Activated CD4-positive, alpha-beta memory T cell treated with anti-CD3 and anti-CD28 coated beads, Interleukin-2, amount 10 ng/mL, durations not matched to agents 7 days and 5 days (primary cell): ENCODE measurements at regions of chr17 and their contacts with region 1.

Region 1: GRCh38 chr17:29180034-29180787 is at the start of gene MYO18A:
- DNase-seq: peak; percentile 84
- H3K4me3 Mint-ChIP-seq: peak within 1 kb of the TSS; percentile 54
- H3K27ac Mint-ChIP-seq: no peak within 1 kb of the TSS
- H3K4me1 Mint-ChIP-seq: peaks cover 40% of the 10 kb centered on the region
- H3K27me3 Mint-ChIP-seq: peaks cover 7% of the 10 kb centered on the region
- total RNA-seq, gene MYO18A: 92.6 to 100 TPM

Region 2: DNA sequence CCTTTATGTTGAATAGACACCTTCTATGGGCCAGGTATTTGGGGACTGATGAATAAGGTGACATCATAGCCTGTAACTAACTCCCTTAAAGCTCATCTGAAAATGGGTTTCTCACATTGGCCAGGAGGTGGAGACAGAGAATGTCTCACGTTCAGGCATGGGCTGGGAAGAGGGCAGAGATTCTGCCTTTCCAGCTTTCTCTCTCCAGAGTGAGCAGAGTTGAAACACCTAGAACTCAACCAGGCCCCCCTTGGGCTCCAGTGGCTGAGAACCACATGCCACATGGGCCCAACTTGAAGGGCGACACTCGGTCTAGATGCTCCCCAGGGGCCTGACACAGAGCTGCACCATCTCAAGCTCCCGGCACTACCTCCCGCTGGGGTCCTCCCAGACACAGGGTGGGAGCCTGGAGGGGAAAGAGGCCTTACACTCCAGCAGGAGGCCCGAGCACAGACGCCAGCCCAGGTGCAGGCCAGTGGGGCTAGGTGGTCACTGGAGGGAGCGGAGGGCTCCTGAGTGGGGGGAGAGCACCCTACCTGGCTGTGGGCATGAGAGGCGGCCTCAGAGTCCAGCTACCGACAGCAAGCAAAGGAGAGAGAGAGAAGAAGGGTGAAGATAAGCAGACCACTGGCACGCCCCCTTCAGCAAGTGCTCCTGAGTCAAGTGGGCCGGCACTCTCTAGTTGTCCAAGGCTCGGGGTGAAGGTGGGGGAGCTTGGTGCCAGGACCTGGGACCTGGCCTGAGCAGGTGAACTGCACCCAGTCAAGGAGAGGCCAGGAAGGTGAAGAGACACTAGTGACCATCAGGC is 55.9 kb before region 1 on chr17:
- CTCF ChIA-PET with region 1: interaction called, 76 read pairs
- POLR2A ChIA-PET with region 1: interaction called, 8 read pairs
- DNase-seq: peak; percentile 53
- H3K4me3 Mint-ChIP-seq: no peak overlapping the region
- H3K27ac Mint-ChIP-seq: no peak overlapping the region
- H3K4me1 Mint-ChIP-seq: peaks cover 8% of the 10 kb centered on the region
- H3K27me3 Mint-ChIP-seq: no peaks in the 10 kb centered on the region

Region 3: GRCh38 chr17:29148790-29149430 is 31.3 kb before region 1 on chr17:
- CTCF ChIA-PET with region 1: interaction called, 261 read pairs
- POLR2A ChIA-PET with region 1: interaction called, 31 read pairs
- DNase-seq: peak; percentile 94
- H3K4me3 Mint-ChIP-seq: peak overlapping the region; percentile 65
- H3K27ac Mint-ChIP-seq: peak overlapping the region; percentile 68
- H3K4me1 Mint-ChIP-seq: peaks cover 55% of the 10 kb centered on the region
- H3K27me3 Mint-ChIP-seq: no peaks in the 10 kb centered on the region

Region 4: DNA sequence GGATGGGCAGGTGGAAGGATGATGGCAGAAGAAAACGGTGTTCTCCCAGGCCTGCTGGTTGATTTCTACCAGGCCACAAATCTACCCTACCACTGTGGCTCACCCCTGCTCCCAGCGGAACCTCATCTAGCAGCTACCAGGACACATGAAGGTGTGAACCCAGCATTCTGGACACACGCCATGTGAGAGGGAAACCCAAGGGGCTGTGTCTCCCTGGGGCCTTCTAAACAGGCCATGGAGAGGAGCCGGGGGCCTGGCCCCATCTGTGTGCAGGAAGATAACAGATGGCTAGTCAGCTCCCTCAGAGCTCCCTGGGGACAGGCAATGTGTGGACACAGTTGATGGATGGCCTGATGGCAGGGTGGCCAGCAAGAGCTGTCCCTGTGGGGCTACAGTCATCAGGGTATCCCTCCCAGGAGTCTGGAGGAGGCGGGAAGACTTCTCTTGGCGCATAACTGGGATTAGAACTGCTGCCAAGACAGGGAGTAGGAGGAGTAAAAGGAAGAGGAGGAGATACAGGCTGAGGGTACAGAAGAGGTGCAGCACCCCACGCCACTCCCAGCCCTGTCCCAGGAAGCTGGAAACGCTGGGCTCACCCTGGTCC is 17.4 kb before region 1 on chr17:
- CTCF ChIA-PET with region 1: interaction called, 12 read pairs
- POLR2A ChIA-PET with region 1: interaction called, 9 read pairs
- DNase-seq: no peak
- H3K4me3 Mint-ChIP-seq: no peak overlapping the region
- H3K27ac Mint-ChIP-seq: no peak overlapping the region
- H3K4me1 Mint-ChIP-seq: peaks cover 17% of the 10 kb centered on the region
- H3K27me3 Mint-ChIP-seq: no peaks in the 10 kb centered on the region

Region 5: DNA sequence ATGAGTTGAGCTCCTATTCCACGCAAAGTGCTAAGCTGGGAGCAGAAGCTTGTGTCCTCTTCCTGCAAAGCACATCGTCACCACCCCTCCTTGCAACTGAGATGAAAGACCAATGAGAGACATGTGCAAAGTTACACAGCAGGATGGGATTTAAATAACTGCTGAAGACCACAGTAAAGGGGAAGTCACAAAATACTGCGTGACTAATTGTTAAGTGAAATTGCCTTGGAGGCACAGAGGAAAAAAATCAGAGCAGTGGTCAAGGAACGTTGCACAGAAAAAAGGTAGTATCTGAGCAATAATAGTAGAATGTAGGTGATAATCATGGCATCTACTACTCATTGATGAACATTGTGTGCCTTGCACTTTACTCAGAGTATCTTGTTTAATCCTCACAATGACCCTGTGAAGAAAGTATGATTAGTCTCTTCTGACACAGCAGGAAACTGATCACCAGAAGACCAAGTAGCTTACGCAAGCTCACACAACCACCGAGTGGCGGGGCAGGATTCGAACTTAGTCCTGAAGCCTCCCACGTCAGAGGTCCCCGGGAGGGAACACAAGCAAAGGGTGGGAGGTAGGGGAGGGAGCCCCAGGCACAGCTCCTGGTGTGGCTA is 15.4 kb after region 1 on chr17:
- CTCF ChIA-PET with region 1: interaction called, 41 read pairs
- POLR2A ChIA-PET with region 1: interaction called, 6 read pairs
- DNase-seq: no peak
- H3K4me3 Mint-ChIP-seq: no peak overlapping the region
- H3K27ac Mint-ChIP-seq: no peak overlapping the region
- H3K4me1 Mint-ChIP-seq: no peaks in the 10 kb centered on the region
- H3K27me3 Mint-ChIP-seq: peaks cover 29% of the 10 kb centered on the region

Region 6: DNA sequence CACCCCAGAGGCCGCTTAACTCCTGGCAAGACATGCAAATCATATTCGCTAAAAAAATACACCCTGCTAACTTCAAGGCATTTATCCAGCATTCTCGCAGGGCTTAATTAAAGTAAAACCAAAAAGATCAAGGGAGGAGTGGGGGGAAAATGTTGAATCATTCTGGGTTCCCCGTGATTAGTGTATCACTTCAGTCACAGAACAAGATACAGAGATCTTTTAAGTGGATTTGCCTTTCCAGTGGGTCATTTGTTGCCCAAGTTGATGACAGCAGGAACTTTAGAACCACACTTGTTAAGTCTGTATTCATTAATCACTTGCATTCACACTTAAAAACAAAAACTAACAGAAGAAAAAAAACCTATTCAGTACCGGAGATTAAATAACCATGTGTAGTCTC is 83.7 kb after region 1 on chr17:
- CTCF ChIA-PET with region 1: no interaction called
- POLR2A ChIA-PET with region 1: no interaction called
- DNase-seq: no peak
- H3K4me3 Mint-ChIP-seq: no peak overlapping the region
- H3K27ac Mint-ChIP-seq: no peak overlapping the region
- H3K4me1 Mint-ChIP-seq: peaks cover 23% of the 10 kb centered on the region
- H3K27me3 Mint-ChIP-seq: no peaks in the 10 kb centered on the region

Region 7: GRCh38 chr17:29322363-29322762 is 142.2 kb after region 1 on chr17:
- CTCF ChIA-PET with region 1: no interaction called
- POLR2A ChIA-PET with region 1: no interaction called
- DNase-seq: no peak
- H3K4me3 Mint-ChIP-seq: no peak overlapping the region
- H3K27ac Mint-ChIP-seq: no peak overlapping the region
- H3K4me1 Mint-ChIP-seq: no peaks in the 10 kb centered on the region
- H3K27me3 Mint-ChIP-seq: peaks cover 2% of the 10 kb centered on the region